Psoas muscle (tissue), 8 donors: ENCODE measurements at regions of chr22 and their contacts with region 1.

Region 1: DNA sequence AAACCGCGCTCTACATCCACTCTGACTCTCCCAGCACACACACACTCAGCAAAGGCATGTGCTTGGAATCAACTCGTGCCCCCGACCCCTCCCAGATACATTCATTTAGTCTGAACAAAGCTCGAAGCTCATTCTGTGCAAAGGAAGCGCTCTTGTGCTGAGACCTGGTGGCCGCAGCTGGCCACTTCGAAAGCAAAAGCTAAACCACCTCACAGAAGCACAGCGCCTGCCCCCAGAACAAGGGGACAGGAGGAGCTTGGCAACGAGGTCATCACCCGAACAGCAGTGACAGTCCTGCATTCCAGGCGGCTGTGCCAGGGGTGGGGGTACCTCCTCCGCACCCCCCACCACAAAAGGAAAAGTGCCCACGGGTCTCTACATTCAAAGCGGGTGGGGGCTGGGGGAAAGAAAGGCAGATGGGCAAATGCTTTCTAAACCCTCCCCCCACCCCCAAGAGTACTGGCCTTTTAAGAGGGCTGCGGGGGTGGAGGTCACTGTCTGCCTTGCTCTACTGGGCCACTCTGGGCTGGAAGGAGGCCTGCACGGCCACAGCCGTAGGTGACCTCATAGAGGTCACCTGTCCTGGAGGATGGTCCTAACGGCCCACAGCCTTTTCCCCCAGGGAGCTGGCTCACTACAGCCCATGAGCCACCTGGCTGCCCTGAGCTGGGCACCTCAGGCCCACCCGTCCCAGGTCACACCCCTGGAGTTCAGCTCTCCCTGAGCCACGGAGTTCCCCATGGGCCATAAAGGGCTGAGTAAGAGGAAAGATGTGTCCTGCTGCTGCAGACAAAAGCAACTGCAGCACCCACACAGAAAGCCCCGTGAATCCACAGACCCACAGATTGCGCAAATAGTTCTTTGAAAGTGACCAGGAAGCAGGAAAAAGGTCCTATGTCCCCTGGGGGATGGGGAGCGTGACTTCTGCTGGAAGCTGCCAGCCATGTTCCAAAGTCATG is 21.3 kb downstream of the CBX7 start:
- DNase-seq: no peak
- ATAC-seq: no peak
- H3K4me3 ChIP-seq: no peak overlapping the region
- H3K27ac ChIP-seq: no peak overlapping the region
- H3K4me1 ChIP-seq: no peaks in the 10 kb centered on the region
- H3K27me3 ChIP-seq: no peaks in the 10 kb centered on the region
- CTCF ChIP-seq: no peak

Region 2: DNA sequence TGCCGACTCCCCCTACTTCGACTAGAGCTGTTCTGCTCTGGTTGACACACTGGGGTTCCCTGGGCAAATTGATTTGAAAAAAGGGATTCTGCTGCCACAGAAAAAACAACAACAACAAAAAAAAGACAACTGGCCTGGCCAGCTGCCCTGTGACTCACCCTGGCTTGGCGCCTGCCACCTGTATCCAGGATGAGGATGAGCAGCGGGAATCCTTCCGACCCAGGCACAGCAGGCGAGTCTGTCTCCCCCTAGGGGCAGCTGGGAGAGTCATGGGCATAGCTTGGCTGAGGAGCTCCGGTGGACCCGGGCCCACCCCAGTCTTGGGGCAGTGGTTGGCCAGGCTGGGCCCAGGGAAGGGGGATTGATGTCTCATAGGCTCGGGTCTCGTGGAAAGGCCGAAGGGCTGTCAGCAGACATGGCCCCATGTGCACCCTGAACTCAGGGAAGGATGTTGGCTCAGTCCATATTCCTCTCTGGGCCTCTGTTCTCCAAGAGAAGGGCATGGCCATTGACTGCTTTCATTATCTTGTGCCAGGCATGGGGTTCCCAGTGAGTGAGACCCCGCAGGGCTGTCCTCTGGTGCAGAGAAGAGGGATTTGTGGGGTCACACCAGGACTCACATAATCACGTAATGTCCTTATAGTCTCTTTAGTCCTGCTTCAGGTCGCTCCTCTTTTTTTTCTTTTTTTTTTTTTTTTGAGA is 364.9 kb before region 1 on chr22:
- intact Hi-C with region 1: loop called in 1 of 2 experiments (anchors 5 kb)
- DNase-seq: peak; percentile 71 to 84
- ATAC-seq: peak; percentile 75 to 87 (median 84)
- H3K4me3 ChIP-seq: no peak overlapping the region
- H3K27ac ChIP-seq: no peak overlapping the region
- H3K4me1 ChIP-seq: peaks cover 17% of the 10 kb centered on the region
- H3K27me3 ChIP-seq: no peaks in the 10 kb centered on the region
- CTCF ChIP-seq: peak; percentile 76

Region 3: DNA sequence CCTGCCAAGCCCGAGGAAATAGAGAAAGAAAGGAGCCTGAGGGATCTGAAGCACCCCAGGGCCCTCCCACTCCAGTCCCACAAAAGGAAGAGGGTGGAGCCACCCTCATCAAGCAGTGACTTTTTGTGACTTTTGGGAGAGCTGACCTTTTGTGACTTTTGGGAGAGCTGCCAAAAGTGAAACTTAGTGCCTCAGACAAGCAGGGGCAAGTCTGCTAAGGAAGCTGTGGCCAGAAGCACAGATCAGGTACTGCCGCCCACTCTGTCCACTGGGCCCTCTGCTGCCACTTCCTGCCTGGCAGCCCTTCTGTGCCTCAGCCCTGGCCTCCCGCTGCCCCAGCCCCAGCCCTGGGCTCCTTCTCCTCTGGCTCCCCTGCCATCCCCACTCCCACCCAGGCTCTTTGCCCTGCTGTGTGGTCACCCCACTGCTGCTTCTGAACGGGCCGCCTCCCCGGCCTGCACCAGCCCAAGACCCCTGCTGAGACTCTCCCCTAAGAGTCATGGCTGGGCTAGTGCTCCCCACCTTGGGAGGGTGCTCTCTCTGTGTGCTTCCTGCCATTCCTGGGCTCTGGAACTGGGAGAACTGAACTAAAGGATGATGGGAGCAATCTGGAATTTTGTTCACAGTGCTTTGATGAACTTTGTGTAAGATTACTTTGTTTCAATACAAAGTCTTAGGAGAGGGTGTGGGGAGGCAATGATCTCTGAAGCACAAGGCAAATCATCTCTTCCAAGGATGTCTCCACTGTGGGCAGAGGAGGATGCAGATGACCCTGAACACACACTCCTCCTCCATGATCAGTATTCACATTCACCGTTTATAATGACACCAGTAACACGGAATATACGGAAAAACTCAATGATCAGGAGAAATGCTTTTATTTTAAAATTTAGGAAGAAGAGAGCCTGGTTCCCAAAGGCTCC is 33.8 kb before region 1 on chr22 and contains the start of gene APOBEC3H:
- intact Hi-C with region 1: no loop called
- DNase-seq: peak in 1 of 2 donors; percentile 44
- ATAC-seq: no peak
- H3K4me3 ChIP-seq: no peak within 1 kb of the TSS
- H3K27ac ChIP-seq: no peak within 1 kb of the TSS
- H3K4me1 ChIP-seq: no peaks in the 10 kb centered on the region
- H3K27me3 ChIP-seq: peaks cover 0 to 14% (median 2%) of the 10 kb centered on the region in 3 donors
- CTCF ChIP-seq: no peak
- total RNA-seq, gene APOBEC3H: not detected

Region 4: GRCh38 chr22:39351689-39352214 is 220.6 kb after region 1 on chr22:
- intact Hi-C with region 1: no loop called
- DNase-seq: no peak
- ATAC-seq: no peak
- H3K4me3 ChIP-seq: no peak overlapping the region
- H3K27ac ChIP-seq: no peak overlapping the region
- H3K4me1 ChIP-seq: peaks cover 7% of the 10 kb centered on the region
- H3K27me3 ChIP-seq: no peaks in the 10 kb centered on the region
- CTCF ChIP-seq: no peak